ENCODE measurements at regions of chr12 and their contacts with region 1.

Region 1: GRCh38 chr12:38906482-38907170 is 1.2 kb upstream of the CPNE8 start:
- DNase-seq: peak; percentile 91
- ATAC-seq: peak; percentile 59
- H3K4me3 ChIP-seq: peak overlapping the region; percentile 83
- H3K27ac ChIP-seq: no peak overlapping the region
- H3K4me1 ChIP-seq: peaks cover 18% of the 10 kb centered on the region
- H3K27me3 ChIP-seq: no peaks in the 10 kb centered on the region
- CTCF ChIP-seq: peak; percentile 86

Region 2: GRCh38 chr12:38138225-38139221 is 768.1 kb before region 1 on chr12:
- CTCF ChIA-PET with region 1: no interaction called
- POLR2A ChIA-PET with region 1: no interaction called
- intact Hi-C with region 1: loop called (anchors 10 kb)
- DNase-seq: peak; percentile 96
- ATAC-seq: peak; percentile 78
- H3K4me3 ChIP-seq: peak overlapping the region; percentile 77
- H3K27ac ChIP-seq: 0 out of 2 replicates have a peak overlapping the region, but pooled peaks have one; percentile 18
- H3K4me1 ChIP-seq: peaks cover 11% of the 10 kb centered on the region
- H3K27me3 ChIP-seq: no peaks in the 10 kb centered on the region
- CTCF ChIP-seq: peak; percentile 94

Region 3: GRCh38 chr12:38384816-38385378 is 521.7 kb before region 1 on chr12:
- CTCF ChIA-PET with region 1: interaction called, 11 read pairs
- POLR2A ChIA-PET with region 1: no interaction called
- intact Hi-C with region 1: loop called (anchors 2 kb)
- DNase-seq: peak; percentile 98
- ATAC-seq: peak; percentile 89
- H3K4me3 ChIP-seq: peak overlapping the region; percentile 45
- H3K27ac ChIP-seq: peak overlapping the region; percentile 96
- H3K4me1 ChIP-seq: peaks cover 48% of the 10 kb centered on the region
- H3K27me3 ChIP-seq: no peaks in the 10 kb centered on the region
- CTCF ChIP-seq: peak; percentile 72

Region 4: DNA sequence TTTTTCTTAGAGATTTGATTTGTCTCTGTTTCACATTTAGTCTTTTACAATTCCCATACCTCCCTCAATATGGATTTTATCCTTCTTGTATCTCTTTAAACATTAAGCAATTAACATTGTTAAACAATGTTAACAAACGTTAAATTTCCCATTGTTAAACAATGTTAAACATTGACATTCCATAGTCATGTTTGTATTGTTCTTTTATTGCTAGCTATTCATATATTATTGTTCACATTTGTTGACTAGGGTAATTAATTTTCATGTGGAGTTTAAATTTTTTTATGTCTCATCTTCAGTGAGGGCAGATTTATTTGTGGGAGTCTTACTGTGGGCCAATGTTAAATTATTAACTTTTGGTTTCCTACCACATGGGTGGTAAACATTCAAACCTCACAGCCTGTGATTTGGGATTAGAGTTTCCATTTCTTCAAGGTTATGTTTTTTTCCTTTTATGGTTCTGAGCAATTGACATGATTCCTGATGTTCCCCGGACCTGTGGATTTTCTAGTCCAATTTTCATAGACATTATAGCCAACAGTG is 295.7 kb before region 1 on chr12:
- CTCF ChIA-PET with region 1: no interaction called
- POLR2A ChIA-PET with region 1: no interaction called
- intact Hi-C with region 1: loop called (anchors 2 kb)
- DNase-seq: no peak
- ATAC-seq: peak; percentile 61
- H3K4me3 ChIP-seq: no peak overlapping the region
- H3K27ac ChIP-seq: no peak overlapping the region
- H3K4me1 ChIP-seq: no peaks in the 10 kb centered on the region
- H3K27me3 ChIP-seq: no peaks in the 10 kb centered on the region
- CTCF ChIP-seq: no peak

Region 5: GRCh38 chr12:38838056-38838850 is 68.4 kb before region 1 on chr12:
- CTCF ChIA-PET with region 1: interaction called, 3 read pairs
- POLR2A ChIA-PET with region 1: interaction called, 5 read pairs
- intact Hi-C with region 1: loop called (anchors 1 kb)
- DNase-seq: no peak
- ATAC-seq: peak; percentile 91
- H3K4me3 ChIP-seq: no peak overlapping the region
- H3K27ac ChIP-seq: no peak overlapping the region
- H3K4me1 ChIP-seq: no peaks in the 10 kb centered on the region
- H3K27me3 ChIP-seq: no peaks in the 10 kb centered on the region
- CTCF ChIP-seq: no peak

Region 6: DNA sequence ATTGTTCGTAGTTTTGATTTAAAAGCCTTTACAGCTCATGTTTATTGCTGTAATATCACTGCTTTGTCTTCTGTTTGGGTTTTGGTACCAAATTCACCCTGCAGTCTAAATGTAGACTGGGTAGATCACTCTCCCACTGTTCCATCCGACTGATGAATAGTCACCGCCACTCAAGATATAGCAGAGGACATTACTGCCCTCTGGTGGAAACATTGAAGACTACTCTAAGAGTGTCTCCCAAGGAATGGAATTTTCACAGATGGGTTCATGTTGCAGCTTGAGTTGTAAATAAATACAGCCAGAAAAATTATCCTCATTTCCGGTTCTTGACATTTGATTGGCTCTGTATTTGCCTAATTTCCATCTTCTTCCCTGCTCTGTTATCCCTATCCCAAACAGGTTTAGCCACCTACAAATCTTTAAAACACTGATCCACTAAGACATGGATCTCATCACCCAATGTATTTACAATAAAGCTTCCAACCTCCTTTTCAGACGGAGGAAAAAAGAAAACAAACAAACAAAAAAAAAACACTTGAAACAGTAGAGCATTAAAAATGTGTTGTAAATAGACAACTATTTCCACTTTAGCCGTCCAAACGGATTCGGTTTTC is 197.0 kb after region 1 on chr12:
- CTCF ChIA-PET with region 1: interaction called, 8 read pairs
- POLR2A ChIA-PET with region 1: interaction called, 3 read pairs
- intact Hi-C with region 1: loop called (anchors 1 kb)
- DNase-seq: peak; percentile 90
- ATAC-seq: peak; percentile 90
- H3K4me3 ChIP-seq: no peak overlapping the region
- H3K27ac ChIP-seq: peak overlapping the region; percentile 71; the same call in 1 of the 2 replicates
- H3K4me1 ChIP-seq: peaks cover 19% of the 10 kb centered on the region
- H3K27me3 ChIP-seq: no peaks in the 10 kb centered on the region
- CTCF ChIP-seq: peak; percentile 85

Measured in PC-3 (cell line).